Gastrocnemius medialis (tissue), 4 donors: ENCODE measurements at regions of chr4 and their contacts with region 1.

Region 1: GRCh38 chr4:48079972-48080391 is 54.1 kb downstream of the TXK start:
- DNase-seq: no peak
- ATAC-seq: no peak
- H3K4me3 ChIP-seq: no peak overlapping the region
- H3K27ac ChIP-seq: no peak overlapping the region
- H3K4me1 ChIP-seq: no peaks in the 10 kb centered on the region
- H3K27me3 ChIP-seq: no peaks in the 10 kb centered on the region
- CTCF ChIP-seq: no peak
- POLR2A ChIP-seq: no peak

Region 2: DNA sequence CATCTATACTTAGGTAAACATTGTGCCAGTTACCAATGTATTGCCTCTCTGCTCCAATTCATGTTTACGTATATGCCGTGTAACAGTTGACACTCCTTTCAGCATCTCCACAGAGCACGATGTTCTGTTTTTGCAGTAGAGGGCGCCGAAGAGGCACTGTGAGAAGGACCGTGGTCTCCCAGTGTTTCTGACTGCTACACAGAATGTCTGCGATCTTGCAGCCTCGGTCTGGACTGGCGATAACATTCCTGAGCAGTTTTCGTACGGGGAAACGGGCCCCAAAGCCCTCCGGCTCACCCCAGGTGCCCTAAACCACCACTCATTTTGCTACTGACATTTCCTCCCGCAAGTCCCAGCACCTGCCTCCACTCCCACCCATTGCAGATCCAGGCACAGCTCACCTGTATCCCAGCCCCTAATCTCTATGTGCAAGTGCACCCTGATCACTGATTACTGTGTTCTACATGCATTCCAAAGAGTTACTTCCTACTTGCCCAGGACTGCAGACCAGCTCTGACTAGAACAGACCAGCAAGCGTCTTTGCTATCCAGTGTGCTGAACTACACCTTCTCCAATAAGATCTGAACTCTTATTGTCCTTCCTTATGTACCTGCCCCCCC is 153.2 kb before region 1 on chr4:
- in situ Hi-C with region 1: loop called in 1 of 4 experiments (anchors 10 kb)
- intact Hi-C with region 1: no loop called
- DNase-seq: no peak
- ATAC-seq: peak in 1 of 2 donors; percentile 72
- H3K4me3 ChIP-seq: peak overlapping the region in 1 of 4 donors; percentile 39
- H3K27ac ChIP-seq: no peak overlapping the region
- H3K4me1 ChIP-seq: no peaks in the 10 kb centered on the region
- H3K27me3 ChIP-seq: no peaks in the 10 kb centered on the region
- CTCF ChIP-seq: peak in 3 of 5 experiments; percentile 21 to 59 (median 42)
- POLR2A ChIP-seq: no peak

Region 3: DNA sequence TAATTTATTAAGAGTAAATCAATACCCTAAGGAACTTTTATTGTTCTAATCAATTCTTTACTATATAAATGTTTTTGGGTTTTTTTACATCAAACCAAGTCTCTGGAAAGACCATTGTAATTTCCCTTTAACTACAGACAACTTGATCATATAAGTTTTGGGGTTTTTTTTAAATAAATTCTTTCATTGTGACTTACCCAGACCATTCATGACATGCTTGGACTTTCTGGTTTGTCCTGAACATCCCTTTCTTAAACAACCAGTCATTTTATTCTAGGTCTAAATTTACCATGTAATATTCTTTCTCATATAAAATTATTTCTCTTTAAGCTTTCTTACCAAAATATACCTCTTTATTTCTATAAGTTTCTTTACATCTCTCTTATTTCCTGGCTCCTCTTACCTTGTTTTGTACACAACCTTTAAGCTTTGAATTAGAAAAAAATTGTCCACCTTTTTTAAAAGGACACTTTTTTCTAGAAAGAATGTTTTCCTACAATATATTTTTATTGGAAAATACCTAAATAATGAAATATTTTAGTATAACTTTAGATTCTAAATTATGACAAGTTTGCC is 71.9 kb before region 1 on chr4:
- in situ Hi-C with region 1: loop called in 3 of 4 experiments (anchors 5 to 10 kb)
- intact Hi-C with region 1: no loop called
- DNase-seq: no peak
- ATAC-seq: no peak
- H3K4me3 ChIP-seq: no peak overlapping the region
- H3K27ac ChIP-seq: no peak overlapping the region
- H3K4me1 ChIP-seq: no peaks in the 10 kb centered on the region
- H3K27me3 ChIP-seq: no peaks in the 10 kb centered on the region
- CTCF ChIP-seq: no peak
- POLR2A ChIP-seq: no peak

Region 4: GRCh38 chr4:48557478-48557877 is 477.5 kb after region 1 on chr4:
- in situ Hi-C with region 1: no loop called
- intact Hi-C with region 1: no loop called
- DNase-seq: no peak
- ATAC-seq: no peak
- H3K4me3 ChIP-seq: no peak overlapping the region
- H3K27ac ChIP-seq: no peak overlapping the region
- H3K4me1 ChIP-seq: no peaks in the 10 kb centered on the region
- H3K27me3 ChIP-seq: no peaks in the 10 kb centered on the region
- CTCF ChIP-seq: no peak
- POLR2A ChIP-seq: no peak